Endothelial cell of umbilical vein (primary cell): ENCODE measurements at regions of chr1 and their contacts with region 1.

Region 1: GRCh38 chr1:204806943-204807687 is 63.5 kb upstream of the NFASC start:
- DNase-seq: peak; percentile 81
- H3K4me3 ChIP-seq: peak overlapping the region in 2 of 3 experiments; percentile 33 to 40
- H3K27ac ChIP-seq: no peak overlapping the region
- H3K4me1 ChIP-seq: no peaks in the 10 kb centered on the region
- H3K27me3 ChIP-seq: peaks cover 2 to 3% of the 10 kb centered on the region in 2 experiments
- CTCF ChIP-seq: peak; percentile 91 to 100
- POLR2A ChIP-seq: no peak

Region 2: GRCh38 chr1:204213668-204214662 is 593.1 kb before region 1 on chr1 and contains the start of gene GOLT1A:
- CTCF ChIA-PET with region 1: interaction called, 10 read pairs
- POLR2A ChIA-PET with region 1: no interaction called
- dilution Hi-C with region 1: no loop called
- intact Hi-C with region 1: no loop called
- DNase-seq: peak; percentile 75
- H3K4me3 ChIP-seq: no peak within 1 kb of the TSS
- H3K27ac ChIP-seq: no peak within 1 kb of the TSS
- H3K4me1 ChIP-seq: no peaks in the 10 kb centered on the region
- H3K27me3 ChIP-seq: no peaks in the 10 kb centered on the region
- CTCF ChIP-seq: peak; percentile 75
- POLR2A ChIP-seq: no peak
- total RNA-seq, gene GOLT1A: not detected in 2 replicates

Region 3: DNA sequence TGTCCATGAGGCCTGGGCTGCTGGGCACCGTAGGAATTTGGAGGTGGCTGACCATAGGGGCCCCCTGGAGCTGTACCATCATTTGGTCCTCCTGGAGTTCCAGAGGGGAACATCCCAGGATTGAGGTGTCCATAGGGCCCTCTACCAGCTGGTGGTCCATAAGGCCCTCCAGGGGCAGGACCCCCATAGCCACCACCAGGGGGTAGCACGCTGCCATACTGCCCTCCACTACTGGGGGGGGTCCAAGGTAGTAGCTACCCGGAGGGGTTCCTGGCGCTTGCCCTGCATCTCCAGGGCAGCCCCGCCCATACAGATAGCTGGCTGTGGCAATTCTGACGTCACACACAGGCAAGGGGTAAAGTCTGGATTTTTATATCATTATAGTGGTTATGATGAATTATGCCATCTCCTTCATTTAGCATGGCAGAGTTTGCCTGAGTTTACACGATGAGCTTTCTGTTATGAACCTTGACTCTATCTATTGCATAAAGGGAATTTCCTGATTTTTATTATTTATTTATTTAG is 277.7 kb before region 1 on chr1:
- CTCF ChIA-PET with region 1: interaction called, 12 read pairs
- POLR2A ChIA-PET with region 1: no interaction called
- dilution Hi-C with region 1: no loop called
- intact Hi-C with region 1: no loop called
- DNase-seq: no peak
- H3K4me3 ChIP-seq: no peak overlapping the region
- H3K27ac ChIP-seq: no peak overlapping the region
- H3K4me1 ChIP-seq: no peaks in the 10 kb centered on the region
- H3K27me3 ChIP-seq: no peaks in the 10 kb centered on the region
- CTCF ChIP-seq: peak in 1 of 2 donors; percentile 10
- POLR2A ChIP-seq: no peak

Region 4: GRCh38 chr1:204578867-204579664 is 228.0 kb before region 1 on chr1:
- CTCF ChIA-PET with region 1: interaction called, 29 read pairs
- POLR2A ChIA-PET with region 1: no interaction called
- dilution Hi-C with region 1: no loop called
- intact Hi-C with region 1: no loop called
- DNase-seq: no peak
- H3K4me3 ChIP-seq: no peak overlapping the region
- H3K27ac ChIP-seq: no peak overlapping the region
- H3K4me1 ChIP-seq: no peaks in the 10 kb centered on the region
- H3K27me3 ChIP-seq: no peaks in the 10 kb centered on the region
- CTCF ChIP-seq: no peak
- POLR2A ChIP-seq: no peak

Region 5: DNA sequence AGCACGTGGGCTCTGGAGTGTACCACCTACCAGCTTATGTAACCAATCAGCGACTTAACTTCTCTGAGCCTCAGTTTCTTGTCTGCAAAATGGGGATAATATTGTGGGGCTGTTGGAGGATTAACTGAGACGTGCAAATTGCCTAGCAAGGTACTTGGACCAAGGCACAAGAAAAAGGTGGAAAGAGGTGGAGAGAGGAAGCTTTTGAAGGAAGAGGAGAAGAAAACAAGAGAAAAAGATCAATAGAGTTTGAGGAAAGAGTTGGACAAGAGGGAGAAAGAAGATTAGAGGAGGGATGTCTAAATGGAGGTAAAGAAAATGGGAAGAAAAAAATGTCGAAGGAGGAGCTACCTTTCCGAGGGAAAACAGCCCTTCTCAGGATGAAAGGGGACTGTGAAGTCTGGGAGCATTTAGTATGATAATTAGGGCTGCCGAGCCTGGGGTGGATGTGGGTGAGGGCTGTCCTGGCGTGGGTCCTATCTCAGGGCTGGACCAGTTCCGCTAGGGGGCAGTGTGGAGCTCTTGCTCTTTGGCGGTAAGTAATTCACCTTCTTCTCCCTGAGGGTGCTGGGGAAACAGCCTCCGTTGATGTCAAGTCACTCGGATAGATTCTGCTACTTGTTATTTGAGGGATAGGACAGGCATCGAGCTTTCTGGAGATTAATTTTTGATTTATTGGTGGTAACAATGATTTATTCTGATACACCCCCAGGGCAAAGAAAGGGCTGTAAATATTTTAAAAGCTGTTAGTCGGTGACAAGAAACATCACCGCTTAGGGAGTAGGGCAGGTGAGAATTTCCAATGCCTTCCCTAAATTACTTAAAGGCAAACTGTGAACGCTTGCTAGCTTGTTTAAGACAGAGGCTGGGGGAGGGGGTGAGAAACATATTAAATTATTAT is 15.4 kb before region 1 on chr1:
- CTCF ChIA-PET with region 1: interaction called, 130 read pairs
- POLR2A ChIA-PET with region 1: no interaction called
- dilution Hi-C with region 1: no loop called
- intact Hi-C with region 1: loop called (anchors 1 kb)
- DNase-seq: peak; percentile 46
- H3K4me3 ChIP-seq: no peak overlapping the region
- H3K27ac ChIP-seq: no peak overlapping the region
- H3K4me1 ChIP-seq: no peaks in the 10 kb centered on the region
- H3K27me3 ChIP-seq: peaks cover 3 to 4% of the 10 kb centered on the region in 2 experiments
- CTCF ChIP-seq: peak; percentile 83 to 88
- POLR2A ChIP-seq: no peak

Region 6: DNA sequence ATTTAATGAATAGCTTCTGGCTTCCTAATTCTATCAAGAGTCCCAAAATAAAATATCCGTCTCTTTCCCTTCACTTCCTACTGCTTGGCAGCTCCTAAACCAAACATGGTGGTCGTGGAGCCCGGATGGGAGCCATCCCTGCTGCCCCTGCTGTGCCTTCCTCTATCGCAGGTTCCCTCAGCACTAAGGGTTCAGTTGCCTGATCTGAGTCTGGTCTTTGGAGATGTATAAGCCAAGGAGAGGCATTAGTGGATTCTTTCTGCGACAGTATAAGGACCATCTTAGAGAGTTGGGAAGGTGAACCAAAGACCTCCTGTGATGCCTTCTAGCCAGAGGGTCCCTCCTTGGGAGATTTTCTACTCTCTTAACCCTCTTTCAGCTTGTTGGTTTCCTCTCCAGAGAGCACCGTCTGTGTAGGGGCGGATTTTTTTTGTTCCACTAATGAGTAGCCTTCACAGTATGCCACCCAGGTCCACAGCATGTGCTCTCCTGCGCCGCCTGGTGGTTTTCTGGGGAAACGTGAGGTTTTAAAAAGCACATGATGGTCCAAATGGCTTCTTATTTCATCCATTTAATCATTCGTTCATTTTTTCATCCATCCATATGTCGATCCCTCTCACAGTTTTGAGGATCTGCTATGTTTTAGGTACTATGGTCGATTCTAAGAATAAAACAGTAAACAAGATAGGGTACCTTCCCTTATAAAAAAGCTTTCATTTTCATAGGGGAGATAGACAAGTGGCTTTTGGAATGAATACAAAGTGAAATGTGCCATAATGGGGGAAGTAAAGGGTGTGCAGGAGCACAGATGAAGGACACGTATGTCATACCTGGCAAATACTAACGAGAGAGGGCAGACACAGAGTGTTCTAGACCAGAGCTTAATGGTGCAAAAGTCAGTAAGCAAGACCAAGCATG is 134.6 kb after region 1 on chr1:
- CTCF ChIA-PET with region 1: interaction called, 33 read pairs
- POLR2A ChIA-PET with region 1: no interaction called
- dilution Hi-C with region 1: no loop called
- intact Hi-C with region 1: no loop called
- DNase-seq: peak; percentile 63
- H3K4me3 ChIP-seq: no peak overlapping the region
- H3K27ac ChIP-seq: no peak overlapping the region
- H3K4me1 ChIP-seq: no peaks in the 10 kb centered on the region
- H3K27me3 ChIP-seq: peaks cover 5 to 10% of the 10 kb centered on the region in 2 experiments
- CTCF ChIP-seq: peak; percentile 78 to 86
- POLR2A ChIP-seq: no peak